HEK293 (cell line): ENCODE measurements at regions of chr12 and their contacts with region 1.

Region 1: GRCh38 chr12:31267966-31268365 is 58.0 kb downstream of the SINHCAF start:
- H3K4me3 ChIP-seq: no peak overlapping the region
- H3K27ac ChIP-seq: no peak overlapping the region
- H3K4me1 ChIP-seq: no peaks in the 10 kb centered on the region
- CTCF ChIP-seq: no peak

Region 2: DNA sequence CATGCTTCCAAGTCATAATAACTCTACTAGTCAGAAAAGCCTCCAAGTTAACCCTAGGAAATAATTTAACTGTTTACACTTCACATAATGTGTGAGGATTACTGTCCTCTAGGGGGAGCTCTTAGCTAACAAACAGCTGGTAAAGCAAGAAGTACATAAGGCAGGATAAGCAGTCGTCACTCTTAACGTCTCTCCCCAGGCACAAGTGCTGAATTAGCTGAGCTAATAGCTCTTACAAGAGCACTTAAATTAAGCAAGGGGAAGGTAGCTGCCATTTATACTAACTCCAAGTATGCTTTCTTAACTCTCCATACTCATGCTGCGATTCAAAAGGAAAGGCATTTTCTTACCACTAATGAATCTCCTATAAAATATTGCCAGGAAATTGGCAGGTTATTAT is 420.7 kb before region 1 on chr12:
- CTCF ChIA-PET with region 1: interaction called, 27 read pairs
- POLR2A ChIA-PET with region 1: no interaction called
- H3K4me3 ChIP-seq: no peak overlapping the region
- H3K27ac ChIP-seq: no peak overlapping the region
- H3K4me1 ChIP-seq: no peaks in the 10 kb centered on the region
- CTCF ChIP-seq: peak; percentile 57

Region 3: DNA sequence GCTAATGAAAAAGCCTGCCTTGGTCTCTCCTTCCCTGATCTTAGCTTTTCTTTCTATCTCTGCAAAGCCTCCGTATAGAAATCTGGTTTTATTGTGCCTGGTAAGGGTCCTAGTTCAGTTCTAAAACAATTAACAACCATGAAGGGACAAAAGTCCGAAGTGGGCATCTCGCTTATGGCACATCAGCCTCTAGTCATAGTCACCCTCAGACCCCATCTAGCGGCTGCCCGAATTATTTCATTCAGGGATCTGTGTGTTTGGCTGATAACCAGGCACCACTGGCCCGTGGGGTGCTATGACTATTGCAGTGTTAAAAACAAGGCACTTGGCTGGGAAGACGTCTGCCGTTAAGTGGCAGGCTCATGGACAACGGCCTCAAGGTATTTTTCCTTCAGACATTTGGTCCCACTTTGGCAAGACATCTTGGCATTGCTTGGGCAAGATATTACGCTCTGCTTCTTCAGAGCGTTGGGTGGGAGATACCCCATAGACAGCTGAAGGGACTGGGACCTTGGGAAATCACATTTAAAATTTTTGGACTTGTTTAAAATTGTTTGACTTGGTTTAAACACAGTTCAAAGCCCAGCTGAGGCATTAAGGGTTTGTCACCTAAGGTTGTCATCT is 29.1 kb before region 1 on chr12:
- CTCF ChIA-PET with region 1: interaction called, 13 read pairs
- POLR2A ChIA-PET with region 1: no interaction called
- H3K4me3 ChIP-seq: no peak overlapping the region
- H3K27ac ChIP-seq: no peak overlapping the region
- H3K4me1 ChIP-seq: peaks cover 6% of the 10 kb centered on the region; the same call in 1 of the 2 replicates
- CTCF ChIP-seq: peak; percentile 23; the same call in 1 of the 2 replicates

Region 4: GRCh38 chr12:31280183-31280582 is 12.2 kb after region 1 on chr12:
- CTCF ChIA-PET with region 1: interaction called, 14 read pairs
- POLR2A ChIA-PET with region 1: no interaction called
- H3K4me3 ChIP-seq: no peak overlapping the region
- H3K27ac ChIP-seq: no peak overlapping the region
- H3K4me1 ChIP-seq: no peaks in the 10 kb centered on the region
- CTCF ChIP-seq: no peak

Region 5: GRCh38 chr12:31297572-31298512 is 29.9 kb after region 1 on chr12:
- CTCF ChIA-PET with region 1: interaction called, 22 read pairs
- POLR2A ChIA-PET with region 1: no interaction called
- H3K4me3 ChIP-seq: no peak overlapping the region
- H3K27ac ChIP-seq: no peak overlapping the region
- H3K4me1 ChIP-seq: peaks cover 5% of the 10 kb centered on the region; the same call in 1 of the 2 replicates
- CTCF ChIP-seq: no peak

Region 6: GRCh38 chr12:31431721-31432240 is 163.8 kb after region 1 on chr12:
- CTCF ChIA-PET with region 1: no interaction called
- POLR2A ChIA-PET with region 1: no interaction called
- H3K4me3 ChIP-seq: no peak overlapping the region
- H3K27ac ChIP-seq: no peak overlapping the region
- H3K4me1 ChIP-seq: no peaks in the 10 kb centered on the region
- CTCF ChIP-seq: no peak